Heart left ventricle (tissue), 16 donors: ENCODE measurements at regions of chr13 and their contacts with region 1.

Region 1: GRCh38 chr13:89695343-89696257 is 1651.9 kb upstream of the MIR17HG start:
- DNase-seq: no peak
- ATAC-seq: peak in 3 of 4 donors; percentile 46 to 74 (median 60)
- H3K4me3 ChIP-seq: no peak overlapping the region
- H3K27ac ChIP-seq: no peak overlapping the region
- H3K4me1 ChIP-seq: no peaks in the 10 kb centered on the region
- H3K27me3 ChIP-seq: no peaks in the 10 kb centered on the region
- CTCF ChIP-seq: peak; percentile 37 to 72 (median 62)
- POLR2A ChIP-seq: no peak

Region 2: DNA sequence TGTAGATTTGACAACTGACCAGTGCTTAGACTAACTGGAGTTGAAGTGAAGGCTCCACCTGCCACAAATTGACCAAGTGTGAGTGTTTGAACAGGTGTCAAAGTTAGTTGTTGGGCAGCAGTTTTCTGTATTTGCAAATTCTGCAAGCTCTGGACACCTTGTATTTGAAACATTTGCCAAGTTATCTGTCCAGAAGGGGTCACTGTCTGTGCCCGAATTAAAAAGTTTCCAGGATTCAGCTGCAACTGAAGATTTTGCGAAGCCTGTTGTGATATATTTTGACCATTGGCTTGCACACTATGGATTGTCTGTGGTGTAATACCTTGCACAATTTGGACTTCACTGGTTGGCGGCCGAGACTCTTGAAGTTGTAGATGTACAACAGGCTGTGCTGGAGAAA is 333.7 kb before region 1 on chr13:
- intact Hi-C with region 1: loop called in 2 of 10 experiments (anchors 5 to 10 kb)
- DNase-seq: no peak
- ATAC-seq: no peak
- H3K4me3 ChIP-seq: no peak overlapping the region
- H3K27ac ChIP-seq: no peak overlapping the region
- H3K4me1 ChIP-seq: no peaks in the 10 kb centered on the region
- H3K27me3 ChIP-seq: no peaks in the 10 kb centered on the region
- CTCF ChIP-seq: peak in 1 of 12 donors; percentile 23
- POLR2A ChIP-seq: no peak

Region 3: GRCh38 chr13:89407357-89407756 is 288.2 kb before region 1 on chr13:
- intact Hi-C with region 1: loop called in 1 of 10 experiments (anchors 10 kb)
- DNase-seq: no peak
- ATAC-seq: no peak
- H3K4me3 ChIP-seq: no peak overlapping the region
- H3K27ac ChIP-seq: no peak overlapping the region
- H3K4me1 ChIP-seq: no peaks in the 10 kb centered on the region
- H3K27me3 ChIP-seq: no peaks in the 10 kb centered on the region
- CTCF ChIP-seq: no peak
- POLR2A ChIP-seq: no peak